Transverse colon (tissue), 4 donors: ENCODE measurements at regions of chr17 and their contacts with region 1.

Region 1: GRCh38 chr17:58417300-58418092 is at the start of gene RNF43:
- DNase-seq: peak; percentile 96
- H3K4me3 ChIP-seq: peak within 1 kb of the TSS in 3 of 4 donors; percentile 32 to 53 (median 39)
- H3K27ac ChIP-seq: peak within 1 kb of the TSS; percentile 74 to 91 (median 80)
- H3K4me1 ChIP-seq: peaks cover 0 to 16% (median 5%) of the 10 kb centered on the region in 4 donors
- H3K27me3 ChIP-seq: peaks cover 2% of the 10 kb centered on the region
- CTCF ChIP-seq: peak; percentile 66 to 98 (median 75)
- EP300 ChIP-seq: no peak
- POLR2A ChIP-seq: peak; percentile 97
- total RNA-seq, gene RNF43: 31.9 to 84.2 (median 38.2) TPM

Region 2: DNA sequence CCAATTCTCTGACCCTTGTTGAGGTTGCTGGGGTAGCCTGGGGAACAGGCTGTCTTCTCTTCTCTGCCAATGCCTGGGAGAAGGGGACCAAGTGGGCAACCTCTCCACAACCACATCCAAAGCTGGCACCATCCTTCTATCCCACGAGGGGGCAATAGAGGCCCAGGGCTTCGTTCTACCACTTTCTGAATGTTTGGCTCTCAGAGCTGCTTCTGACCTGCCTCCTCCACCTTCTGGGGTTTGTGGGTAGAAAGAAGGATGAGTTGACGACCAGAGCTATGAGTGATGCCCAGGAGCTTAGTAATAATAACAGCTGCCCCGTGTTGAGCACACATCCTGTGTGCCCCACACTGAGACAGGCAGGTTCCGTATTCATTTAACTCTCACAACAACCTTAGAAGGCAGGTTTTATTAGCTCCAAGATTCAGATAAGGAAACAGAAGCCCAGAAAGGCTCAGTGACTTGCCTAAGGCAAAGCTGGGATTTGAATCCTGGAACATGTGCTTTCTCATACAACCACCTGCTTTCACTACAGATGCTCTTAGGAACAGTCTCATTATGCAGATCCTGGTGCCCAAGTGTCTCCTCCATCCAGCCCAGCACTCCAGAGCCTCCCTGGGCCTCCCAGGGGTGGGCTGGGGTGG is 100.0 kb before region 1 on chr17:
- in situ Hi-C with region 1: loop called in 1 of 4 experiments (anchors 10 kb)
- intact Hi-C with region 1: no loop called
- DNase-seq: peak; percentile 69
- H3K4me3 ChIP-seq: no peak overlapping the region
- H3K27ac ChIP-seq: peak overlapping the region in 1 of 4 donors; percentile 26
- H3K4me1 ChIP-seq: peaks cover 0 to 7% (median 4%) of the 10 kb centered on the region in 4 donors
- H3K27me3 ChIP-seq: no peaks in the 10 kb centered on the region
- CTCF ChIP-seq: peak; percentile 58 to 85 (median 73)
- EP300 ChIP-seq: no peak
- POLR2A ChIP-seq: no peak

Region 3: DNA sequence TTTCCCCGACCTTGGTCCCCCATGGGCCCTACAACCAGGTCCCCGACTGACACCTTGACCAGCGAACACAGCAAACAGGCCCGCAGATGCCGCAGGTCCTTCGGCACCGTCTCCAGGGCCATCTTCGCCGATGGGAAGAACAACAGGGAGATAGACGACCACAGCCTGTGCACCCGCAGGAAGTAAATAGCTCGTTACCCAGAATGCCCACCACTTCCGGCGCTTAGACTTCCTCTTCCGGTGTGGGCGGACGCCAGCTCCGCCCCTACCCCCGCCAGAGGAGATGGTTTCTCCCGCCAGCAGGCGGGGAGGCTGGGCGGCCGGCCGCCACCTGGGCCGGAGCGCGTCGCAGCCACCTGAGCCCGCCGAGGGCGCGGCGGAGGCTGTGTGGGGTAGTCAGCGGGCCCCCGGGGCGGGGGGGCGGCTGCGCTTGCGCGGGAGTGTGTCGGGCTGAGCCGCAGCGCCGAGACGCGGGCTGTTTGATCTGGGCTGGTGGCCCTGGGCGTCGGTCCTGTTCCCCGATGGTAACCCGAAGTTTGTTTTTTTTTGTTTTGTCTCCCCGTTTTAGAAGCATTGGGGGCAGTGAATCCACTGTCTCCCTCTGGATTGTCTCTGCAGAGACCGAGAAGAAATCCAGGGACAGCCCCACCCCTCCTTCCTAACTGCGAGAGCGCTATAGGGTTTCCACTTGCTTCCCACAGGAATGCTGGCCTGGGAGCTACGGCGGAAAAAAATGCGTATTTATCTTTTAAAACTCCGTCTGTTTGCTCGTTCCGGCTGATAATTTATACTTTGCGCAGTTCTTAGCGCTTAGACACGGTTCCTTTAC is 65.3 kb before region 1 on chr17 and contains the start of gene SUPT4H1:
- in situ Hi-C with region 1: loop called in 1 of 4 experiments (anchors 10 kb)
- intact Hi-C with region 1: no loop called
- DNase-seq: peak; percentile 93
- H3K4me3 ChIP-seq: peak within 1 kb of the TSS; percentile 63 to 96 (median 78)
- H3K27ac ChIP-seq: peak within 1 kb of the TSS; percentile 93
- H3K4me1 ChIP-seq: peaks cover 14 to 23% (median 20%) of the 10 kb centered on the region in 4 donors
- H3K27me3 ChIP-seq: no peaks in the 10 kb centered on the region
- CTCF ChIP-seq: peak in 2 of 5 experiments; percentile 7 to 9
- EP300 ChIP-seq: no peak
- POLR2A ChIP-seq: peak; percentile 81
- total RNA-seq, gene SUPT4H1: 12.0 to 66.3 (median 40.0) TPM

Region 4: DNA sequence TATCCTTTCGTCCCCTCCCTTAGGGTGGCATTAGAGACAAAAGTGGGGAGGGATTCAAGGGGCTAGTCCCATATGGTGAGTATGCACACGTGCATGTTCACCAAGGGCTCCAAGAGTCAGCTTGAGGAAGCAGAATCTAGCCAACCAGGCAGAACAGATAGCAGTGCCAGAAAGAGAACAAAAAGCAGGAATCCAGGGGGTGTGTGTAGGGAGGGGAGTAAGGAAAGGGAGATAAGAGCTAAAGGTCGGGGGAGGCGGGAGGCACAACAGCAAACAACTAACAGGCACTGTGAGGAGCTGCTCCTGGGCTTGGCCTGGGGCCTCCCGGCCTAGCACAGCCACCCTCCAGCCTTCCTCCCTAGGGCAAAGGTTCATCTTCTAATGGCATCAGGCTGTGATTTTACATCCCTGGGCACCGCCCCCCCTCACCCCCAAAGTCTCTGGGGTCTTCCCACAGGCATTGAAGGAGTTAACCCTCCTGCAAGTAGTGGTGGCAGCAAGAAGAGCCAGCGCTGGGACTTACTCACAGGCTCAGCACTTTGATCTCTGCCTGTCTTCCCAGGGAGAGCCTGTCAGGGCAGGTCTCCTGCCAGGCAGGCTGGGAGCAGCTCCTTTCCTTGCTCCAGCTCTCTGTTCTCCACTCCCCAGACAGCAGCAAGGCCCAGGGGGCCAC is 53.1 kb before region 1 on chr17:
- in situ Hi-C with region 1: loop called in 2 of 4 experiments (anchors 10 kb)
- intact Hi-C with region 1: no loop called
- DNase-seq: peak; percentile 65
- H3K4me3 ChIP-seq: no peak overlapping the region
- H3K27ac ChIP-seq: peak overlapping the region; percentile 82 to 91 (median 84)
- H3K4me1 ChIP-seq: peaks cover 12 to 53% (median 42%) of the 10 kb centered on the region in 4 donors
- H3K27me3 ChIP-seq: no peaks in the 10 kb centered on the region
- CTCF ChIP-seq: no peak
- EP300 ChIP-seq: no peak
- POLR2A ChIP-seq: no peak